ENCODE measurements at regions of chr1 and their contacts with region 1.

Region 1: DNA sequence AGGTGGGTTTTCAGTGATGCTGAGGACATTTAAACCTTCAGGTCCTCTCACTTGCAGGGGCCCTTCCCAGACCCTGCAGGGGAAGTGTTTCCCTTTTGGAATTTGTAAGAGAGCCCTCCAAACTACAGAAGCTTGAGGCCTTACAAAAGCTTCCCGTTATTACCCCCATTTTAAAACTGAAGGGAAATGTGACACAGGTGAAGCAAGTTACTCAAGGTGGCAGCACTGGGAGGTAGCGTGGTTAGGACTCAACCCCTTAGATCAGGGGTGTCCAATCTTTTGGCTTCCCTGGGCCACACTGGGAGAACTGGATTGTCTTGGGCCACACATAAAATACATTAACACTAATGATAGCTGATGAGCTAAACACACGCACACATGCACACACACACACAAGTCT is 15.9 kb upstream of the ZC3H12A start:
- H3K4me3 ChIP-seq: no peak overlapping the region
- H3K27ac ChIP-seq: no peak overlapping the region
- H3K4me1 ChIP-seq: no peaks in the 10 kb centered on the region
- CTCF ChIP-seq: no peak

Region 2: DNA sequence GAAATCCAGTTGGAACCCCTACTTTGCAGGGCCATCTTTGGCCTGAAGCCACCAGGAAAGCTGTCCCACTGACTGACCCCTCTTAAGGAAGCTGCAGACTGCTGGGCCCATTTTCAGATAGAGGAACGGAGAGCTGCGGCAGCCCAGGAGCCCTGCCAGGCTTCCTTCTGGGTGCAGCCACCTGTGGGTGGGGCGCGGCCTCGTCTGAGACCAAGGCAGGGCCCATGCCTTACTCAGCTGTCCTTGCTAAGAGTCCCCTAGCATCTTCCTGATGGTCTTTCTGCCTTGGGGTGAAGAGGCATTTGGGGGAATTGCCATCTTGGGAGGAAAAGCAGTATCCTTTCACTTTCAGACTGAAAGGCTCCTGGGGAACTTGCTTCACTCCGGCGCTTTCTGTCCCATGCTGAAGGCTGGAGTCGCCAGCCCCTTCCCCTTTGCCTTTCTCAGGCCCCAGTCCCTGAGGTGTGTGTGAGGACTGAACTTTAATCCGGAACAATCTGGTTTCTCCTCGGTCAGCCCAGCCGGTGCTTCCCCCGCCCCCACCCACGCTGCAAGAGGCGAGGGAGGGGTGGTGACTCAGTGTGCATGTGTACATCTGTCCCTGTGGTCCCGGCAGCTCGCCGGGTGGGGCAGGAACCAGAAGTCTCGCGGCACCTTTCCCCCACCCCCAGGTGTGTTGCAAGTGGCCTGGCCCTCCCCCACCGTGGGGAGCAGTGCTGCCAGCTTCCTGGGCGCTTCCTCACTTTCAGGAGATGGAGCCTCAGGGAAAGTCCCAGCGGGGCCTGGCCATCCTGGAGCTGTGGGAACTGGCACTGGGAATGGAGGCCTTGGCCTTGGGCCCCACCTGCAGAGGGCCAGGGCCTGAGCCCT is 21.0 kb after region 1 on chr1:
- CTCF ChIA-PET with region 1: interaction called, 154 read pairs
- POLR2A ChIA-PET with region 1: interaction called, 19 read pairs
- H3K4me3 ChIP-seq: peak overlapping the region; percentile 16
- H3K27ac ChIP-seq: no peak overlapping the region
- H3K4me1 ChIP-seq: peaks cover 7% of the 10 kb centered on the region
- CTCF ChIP-seq: no peak

Measured in HEK293 (cell line).